GM18951 (cell line): ENCODE measurements at regions of chr11 and their contacts with region 1.

Region 1: GRCh38 chr11:36564376-36565030 is 3.3 kb upstream of the RAG1 start:
- POLR2A ChIP-seq: no peak

Region 2: DNA sequence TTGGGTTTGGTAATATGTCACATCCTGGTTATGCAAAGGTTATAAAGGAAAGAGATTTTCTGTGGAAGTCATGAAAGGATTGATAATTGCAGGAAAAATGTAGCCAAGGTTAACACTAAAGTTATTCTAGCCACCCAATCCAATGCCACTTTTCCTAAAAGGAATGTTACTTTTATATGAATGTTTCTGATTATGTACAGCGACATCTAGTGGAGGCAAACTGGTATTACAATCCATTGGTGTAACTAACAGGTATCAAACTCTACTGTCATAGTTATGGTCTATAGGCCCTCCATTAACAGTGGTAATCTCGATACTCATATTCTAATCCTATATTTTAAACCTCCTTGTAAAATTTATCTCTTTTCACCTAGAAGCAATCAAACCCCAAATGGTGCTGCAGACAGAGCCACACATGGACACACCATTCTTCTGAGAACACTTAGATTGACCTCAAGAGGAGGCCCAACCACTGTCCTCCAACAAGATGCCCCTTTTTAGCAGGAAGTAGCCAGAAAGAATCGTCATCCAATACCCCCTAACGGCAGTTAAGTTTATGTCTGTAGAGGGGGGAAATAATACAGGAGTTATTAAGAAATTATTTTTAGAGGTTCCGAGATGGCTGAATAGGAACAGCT is 108.4 kb after region 1 on chr11:
- in situ Hi-C with region 1: loop called (anchors 10 kb)
- POLR2A ChIP-seq: no peak

Region 3: GRCh38 chr11:37571246-37571645 is 1006.7 kb after region 1 on chr11:
- in situ Hi-C with region 1: no loop called
- POLR2A ChIP-seq: no peak